Activated CD4-positive, alpha-beta T cell treated with anti-CD3 and anti-CD28 coated beads for 36 hours (primary cell): ENCODE measurements at regions of chr6 and their contacts with region 1.

Region 1: DNA sequence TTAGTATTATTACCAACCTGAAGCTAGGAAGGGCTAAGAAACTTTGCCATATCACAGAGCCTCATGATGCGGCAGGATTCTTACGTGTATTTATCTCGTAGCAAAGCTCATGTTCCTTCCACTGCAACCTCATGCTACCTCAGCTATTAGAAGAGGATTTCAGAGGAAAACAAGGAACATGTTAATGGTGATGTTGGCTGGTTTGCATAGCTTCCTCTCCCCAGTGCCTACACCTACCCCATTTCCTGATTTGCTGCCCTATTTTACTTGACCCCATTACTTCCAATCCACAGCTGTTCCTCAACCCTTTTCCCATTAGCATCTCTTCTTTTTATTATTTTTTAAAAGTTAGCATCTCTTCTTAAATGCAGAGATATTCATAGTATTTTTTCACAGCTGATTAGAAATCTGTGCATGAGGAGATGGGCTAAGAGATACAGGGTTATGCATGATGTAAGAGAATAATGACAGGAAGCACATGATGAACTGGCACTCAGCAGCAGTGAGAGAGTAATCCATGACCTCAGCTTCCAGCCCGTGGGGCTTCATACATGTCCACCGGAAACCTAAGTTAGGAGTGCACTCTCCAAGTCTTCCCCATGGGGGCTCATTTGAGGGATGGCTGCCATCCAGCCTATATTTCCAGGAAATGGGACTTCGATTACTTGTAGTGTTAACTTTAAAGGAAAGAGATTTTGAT is 106.1 kb upstream of the ASF1A start:
- DNase-seq: no peak
- ATAC-seq: peak; percentile 40
- H3K4me3 Mint-ChIP-seq: no peak overlapping the region
- H3K27ac Mint-ChIP-seq: peak overlapping the region; percentile 51
- H3K4me1 Mint-ChIP-seq: peaks cover 35% of the 10 kb centered on the region
- H3K27me3 Mint-ChIP-seq: no peaks in the 10 kb centered on the region

Region 2: DNA sequence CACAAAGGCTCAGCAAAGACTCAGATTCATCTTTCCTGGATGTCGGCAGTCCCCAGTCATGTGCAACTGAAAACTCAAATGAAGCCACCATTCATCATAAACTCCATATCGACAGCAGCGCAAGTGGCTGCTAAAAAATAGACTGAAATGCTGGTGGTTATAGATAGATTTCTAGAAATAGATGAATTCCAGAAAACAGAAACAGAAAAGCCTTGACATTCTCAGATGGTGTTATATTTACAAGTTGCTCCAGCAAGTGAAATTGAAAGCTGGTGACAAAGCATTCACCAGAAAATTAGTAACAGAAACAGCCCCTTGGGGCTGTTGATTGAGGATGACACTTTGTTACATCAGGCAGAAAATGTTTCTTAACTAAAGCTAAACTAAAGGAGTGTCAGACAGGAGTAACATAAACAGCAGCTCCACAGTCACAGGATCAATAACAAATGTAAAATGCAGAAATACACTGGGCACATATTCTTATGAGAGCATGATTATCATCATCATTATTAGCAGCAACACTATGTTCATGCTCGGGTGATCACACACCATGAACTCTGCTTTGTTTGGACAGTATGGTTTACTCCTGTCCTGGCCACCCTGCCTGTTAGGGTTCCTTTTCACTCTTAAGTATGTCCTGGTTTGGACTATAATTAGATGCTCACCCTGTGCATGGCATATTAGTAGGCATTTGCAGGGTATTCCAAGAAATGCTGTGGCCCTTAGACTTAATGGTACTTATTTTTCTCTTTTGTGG is 917.2 kb before region 1 on chr6:
- CTCF ChIA-PET with region 1: no interaction called
- POLR2A ChIA-PET with region 1: no interaction called
- intact Hi-C with region 1: no loop called
- DNase-seq: no peak
- ATAC-seq: peak; percentile 74
- H3K4me3 Mint-ChIP-seq: no peak overlapping the region
- H3K27ac Mint-ChIP-seq: peak overlapping the region; percentile 62
- H3K4me1 Mint-ChIP-seq: peaks cover 6% of the 10 kb centered on the region
- H3K27me3 Mint-ChIP-seq: peaks cover 2% of the 10 kb centered on the region

Region 3: DNA sequence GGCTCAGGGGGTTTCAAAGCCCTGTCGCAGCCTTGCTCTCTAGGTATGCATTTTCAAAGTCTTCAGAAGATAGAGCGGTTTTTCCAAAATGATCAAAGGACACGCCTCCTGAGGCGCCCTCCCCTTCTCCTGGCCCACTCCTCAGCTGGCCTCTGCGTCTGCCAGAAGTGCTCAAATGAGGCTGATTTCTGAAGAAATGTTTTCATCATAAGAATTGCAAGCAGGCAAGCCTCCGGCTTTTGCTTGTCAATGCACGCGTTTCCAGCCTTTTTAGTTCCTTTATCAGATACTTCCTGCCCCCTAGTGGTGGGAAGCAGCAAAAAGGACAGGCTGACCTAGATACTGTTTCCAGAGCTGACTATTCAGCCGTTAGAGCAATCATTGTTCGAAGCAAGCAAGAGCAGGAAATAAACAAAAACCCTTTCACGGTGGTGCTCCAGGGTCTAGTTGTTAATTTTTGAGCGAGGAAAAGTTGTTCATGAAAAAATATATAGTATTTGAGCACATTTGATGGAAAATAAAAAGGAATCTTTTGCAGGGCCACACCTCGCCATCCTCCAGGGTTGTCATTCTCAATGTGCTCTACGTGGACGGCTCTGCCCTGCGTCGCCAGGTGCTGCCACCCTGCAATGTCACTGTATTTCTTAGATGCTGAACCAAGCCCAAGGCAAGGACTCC is 12.7 kb after region 1 on chr6:
- CTCF ChIA-PET with region 1: interaction called, 18 read pairs
- POLR2A ChIA-PET with region 1: no interaction called
- intact Hi-C with region 1: no loop called
- DNase-seq: peak; percentile 89
- ATAC-seq: peak; percentile 96
- H3K4me3 Mint-ChIP-seq: no peak overlapping the region
- H3K27ac Mint-ChIP-seq: peak overlapping the region; percentile 7
- H3K4me1 Mint-ChIP-seq: peaks cover 28% of the 10 kb centered on the region
- H3K27me3 Mint-ChIP-seq: no peaks in the 10 kb centered on the region

Region 4: GRCh38 chr6:118980063-118980462 is 192.2 kb after region 1 on chr6:
- CTCF ChIA-PET with region 1: no interaction called
- POLR2A ChIA-PET with region 1: no interaction called
- intact Hi-C with region 1: no loop called
- DNase-seq: no peak
- ATAC-seq: no peak
- H3K4me3 Mint-ChIP-seq: no peak overlapping the region
- H3K27ac Mint-ChIP-seq: no peak overlapping the region
- H3K4me1 Mint-ChIP-seq: no peaks in the 10 kb centered on the region
- H3K27me3 Mint-ChIP-seq: no peaks in the 10 kb centered on the region

Region 5: GRCh38 chr6:119814609-119815400 is 1026.9 kb after region 1 on chr6:
- CTCF ChIA-PET with region 1: no interaction called
- POLR2A ChIA-PET with region 1: no interaction called
- intact Hi-C with region 1: no loop called
- DNase-seq: no peak
- ATAC-seq: no peak
- H3K4me3 Mint-ChIP-seq: no peak overlapping the region
- H3K27ac Mint-ChIP-seq: no peak overlapping the region
- H3K4me1 Mint-ChIP-seq: no peaks in the 10 kb centered on the region
- H3K27me3 Mint-ChIP-seq: no peaks in the 10 kb centered on the region